Psoas muscle (tissue), 8 donors: ENCODE measurements at regions of chr16 and their contacts with region 1.

Region 1: GRCh38 chr16:30526823-30527635 is 663 bp upstream of the ZNF768 start:
- DNase-seq: peak; percentile 99
- ATAC-seq: peak; percentile 91 to 93 (median 92)
- H3K4me3 ChIP-seq: peak overlapping the region; percentile 93
- H3K27ac ChIP-seq: peak overlapping the region; percentile 99
- H3K4me1 ChIP-seq: peaks cover 17% of the 10 kb centered on the region
- H3K27me3 ChIP-seq: no peaks in the 10 kb centered on the region
- CTCF ChIP-seq: peak; percentile 32

Region 2: DNA sequence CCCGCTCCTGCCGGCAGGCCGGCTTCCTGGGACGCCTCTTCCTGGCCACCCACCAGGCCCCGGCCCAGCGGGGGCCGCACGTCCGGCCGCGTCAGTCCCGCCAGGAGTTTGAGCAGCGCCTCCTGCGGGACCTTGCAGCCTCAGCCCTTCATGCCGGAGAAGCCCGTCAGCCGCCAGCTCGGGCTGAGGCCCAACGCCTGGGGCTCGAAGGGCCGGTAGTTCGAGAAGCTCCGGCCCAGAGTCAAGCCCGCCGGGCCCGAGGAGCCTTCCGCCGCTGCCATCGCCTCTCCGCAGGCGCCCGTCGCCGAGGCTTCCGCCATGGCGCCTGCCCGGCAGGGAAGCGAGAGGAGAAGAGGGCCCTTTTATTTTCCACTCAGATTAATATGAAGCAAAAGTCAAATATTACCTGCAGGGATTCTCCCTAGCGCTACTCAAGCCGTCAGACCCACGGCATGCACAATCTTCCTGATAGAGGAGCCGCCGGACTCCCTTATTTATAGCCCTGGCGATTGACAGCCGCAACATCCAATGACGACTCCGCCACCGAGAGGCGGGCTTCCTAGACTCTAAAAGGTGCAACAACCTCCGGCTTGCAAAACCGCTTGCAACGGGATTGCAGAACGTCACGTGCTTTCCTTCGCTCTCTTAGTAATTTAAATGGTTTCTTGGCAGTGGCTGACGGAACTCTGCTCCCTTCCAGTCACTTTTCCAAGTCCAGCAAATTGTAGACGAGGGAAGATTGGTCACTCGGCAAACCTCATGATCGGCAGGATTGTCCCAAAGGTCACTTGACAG is 81.4 kb before region 1 on chr16 and contains the start of gene SEPHS2:
- intact Hi-C with region 1: loop called (anchors 1 to 5 kb)
- DNase-seq: peak; percentile 98 to 99
- ATAC-seq: peak; percentile 94 to 96 (median 96)
- H3K4me3 ChIP-seq: peak within 1 kb of the TSS; percentile 97
- H3K27ac ChIP-seq: peak within 1 kb of the TSS; percentile 100
- H3K4me1 ChIP-seq: peaks cover 22% of the 10 kb centered on the region
- H3K27me3 ChIP-seq: no peaks in the 10 kb centered on the region
- CTCF ChIP-seq: peak; percentile 39
- total RNA-seq, gene SEPHS2: 25.4 to 61.4 (median 46.9) TPM

Region 3: GRCh38 chr16:30571695-30572600 is 44.9 kb after region 1 on chr16 and contains the start of gene ZNF688:
- intact Hi-C with region 1: loop called in 1 of 2 experiments (anchors 5 kb)
- DNase-seq: peak; percentile 96 to 98
- ATAC-seq: peak; percentile 88 to 90 (median 89)
- H3K4me3 ChIP-seq: peak within 1 kb of the TSS; percentile 91
- H3K27ac ChIP-seq: peak within 1 kb of the TSS; percentile 97
- H3K4me1 ChIP-seq: peaks cover 16% of the 10 kb centered on the region
- H3K27me3 ChIP-seq: no peaks in the 10 kb centered on the region
- CTCF ChIP-seq: no peak
- total RNA-seq, gene ZNF688: 11.7 to 21.2 (median 16.5) TPM

Region 4: DNA sequence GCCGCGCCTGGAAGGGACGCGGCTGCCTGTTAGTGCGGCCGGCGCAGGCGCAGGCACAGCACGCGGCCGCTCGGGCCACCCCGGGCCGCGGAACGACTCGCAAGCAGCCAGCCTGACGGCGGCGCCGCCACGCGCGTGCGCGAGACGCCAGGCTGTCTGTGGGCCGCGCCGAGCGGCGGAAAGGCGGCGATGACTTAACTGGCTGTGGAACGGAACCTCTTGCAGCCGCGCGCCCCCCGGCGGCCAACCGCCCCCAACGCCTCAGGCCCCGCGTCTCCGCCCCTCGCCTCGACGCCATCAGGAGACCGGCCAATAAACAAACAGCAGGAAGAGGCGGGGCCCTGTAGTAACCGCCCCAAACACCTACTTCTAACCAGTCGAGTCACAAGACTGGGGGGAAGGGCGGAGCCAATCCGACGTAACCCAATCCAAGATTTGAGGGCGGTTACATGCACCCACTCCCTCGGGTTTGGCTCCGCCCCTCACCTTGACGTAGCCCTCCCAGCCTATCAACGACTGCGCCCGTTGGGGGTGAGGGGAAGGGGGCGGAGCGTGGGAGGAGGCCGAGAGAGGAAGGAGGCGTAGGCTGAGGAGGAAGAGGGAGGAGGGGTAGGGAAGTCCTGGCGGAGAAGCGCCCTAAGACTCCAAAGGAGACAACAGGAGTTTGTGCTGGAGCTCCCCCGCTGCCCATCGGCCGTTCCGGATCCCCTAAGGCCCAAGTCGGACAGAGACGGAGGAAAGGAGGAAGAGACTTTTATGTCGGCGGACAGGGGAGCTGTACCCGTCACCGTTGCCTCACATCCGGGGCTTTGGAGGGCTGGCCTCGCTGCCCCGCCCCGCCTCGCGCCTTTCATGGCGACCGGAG is 131.1 kb after region 1 on chr16 and contains the start of gene FBRS:
- intact Hi-C with region 1: loop called in 1 of 2 experiments (anchors 5 kb)
- DNase-seq: peak; percentile 100
- ATAC-seq: peak; percentile 86 to 88 (median 87)
- H3K4me3 ChIP-seq: peak within 1 kb of the TSS; percentile 93
- H3K27ac ChIP-seq: peak within 1 kb of the TSS; percentile 100
- H3K4me1 ChIP-seq: peaks cover 37% of the 10 kb centered on the region
- H3K27me3 ChIP-seq: no peaks in the 10 kb centered on the region
- CTCF ChIP-seq: peak; percentile 75
- total RNA-seq, gene FBRS: 31.2 to 58.5 (median 38.6) TPM

Region 5: GRCh38 chr16:30761928-30762810 is 235.1 kb after region 1 on chr16 and contains the starts of genes CFAP119 and RNF40:
- intact Hi-C with region 1: no loop called
- DNase-seq: peak; percentile 96 to 98
- ATAC-seq: peak; percentile 98
- H3K4me3 ChIP-seq: peak within 1 kb of the TSS; percentile 97
- H3K27ac ChIP-seq: peak within 1 kb of the TSS; percentile 93
- H3K4me1 ChIP-seq: peaks cover 26% of the 10 kb centered on the region
- H3K27me3 ChIP-seq: no peaks in the 10 kb centered on the region
- CTCF ChIP-seq: no peak
- total RNA-seq, gene CFAP119: 0.52 to 2.4 (median 0.78) TPM
- total RNA-seq, gene RNF40: 26.8 to 49.1 (median 36.5) TPM